GM12878 (cell line): ENCODE measurements at regions of chr2 and their contacts with region 1.

Region 1: GRCh38 chr2:108629417-108629816 is 89.9 kb upstream of the RANBP2 start:
- DNase-seq: no peak
- ATAC-seq: peak; percentile 74
- H3K4me3 ChIP-seq: peak overlapping the region; percentile 23; the same call in 1 of the 2 replicates
- H3K27ac ChIP-seq: peak overlapping the region; percentile 53; the same call in 1 of the 2 replicates
- H3K4me1 ChIP-seq: peaks cover 41% of the 10 kb centered on the region
- H3K27me3 ChIP-seq: no peaks in the 10 kb centered on the region
- CTCF ChIP-seq: no peak
- EP300 ChIP-seq: peak; percentile 67 to 68; a peak in 3 of 4 replicates
- POLR2A ChIP-seq: no peak
- RAD21 ChIP-seq: 0 out of 2 replicates have a peak, but pooled peaks have one; percentile 1

Region 2: GRCh38 chr2:108594132-108594981 is 35.1 kb before region 1 on chr2:
- CTCF ChIA-PET with region 1: interaction called, 118 read pairs
- POLR2A ChIA-PET with region 1: no interaction called
- RAD21 ChIA-PET with region 1: interaction called, 44 read pairs
- SMC1A ChIA-PET with region 1: interaction called, 11 read pairs
- in situ Hi-C with region 1: no loop called
- intact Hi-C with region 1: no loop called
- DNase-seq: no peak
- ATAC-seq: peak; percentile 94
- H3K4me3 ChIP-seq: no peak overlapping the region
- H3K27ac ChIP-seq: no peak overlapping the region; the same call in 1 of the 2 replicates
- H3K4me1 ChIP-seq: peaks cover 34% of the 10 kb centered on the region
- H3K27me3 ChIP-seq: no peaks in the 10 kb centered on the region
- CTCF ChIP-seq: no peak
- EP300 ChIP-seq: peak; percentile 94 to 98
- POLR2A ChIP-seq: no peak
- RAD21 ChIP-seq: no peak